Heart right ventricle (tissue), 16 donors: ENCODE measurements at regions of chr3 and their contacts with region 1.

Region 1: GRCh38 chr3:69649120-69650065 is 89.9 kb upstream of the MITF start:
- DNase-seq: no peak
- ATAC-seq: peak in 7 of 8 donors; percentile 66 to 92 (median 74)
- H3K4me3 ChIP-seq: peak overlapping the region in 1 of 10 donors; percentile 9
- H3K27ac ChIP-seq: peak overlapping the region in 1 of 10 donors; percentile 6
- H3K4me1 ChIP-seq: peaks cover 7 to 30% (median 21%) of the 10 kb centered on the region in 9 donors
- H3K27me3 ChIP-seq: no peaks in the 10 kb centered on the region
- CTCF ChIP-seq: no peak

Region 2: GRCh38 chr3:69368129-69368741 is 281.2 kb before region 1 on chr3:
- intact Hi-C with region 1: no loop called
- DNase-seq: no peak
- ATAC-seq: peak in 5 of 8 donors; percentile 33 to 62 (median 35)
- H3K4me3 ChIP-seq: no peak overlapping the region
- H3K27ac ChIP-seq: peak overlapping the region in 4 of 10 donors; percentile 49 to 89 (median 79)
- H3K4me1 ChIP-seq: peaks cover 0 to 55% (median 28%) of the 10 kb centered on the region in 9 donors
- H3K27me3 ChIP-seq: no peaks in the 10 kb centered on the region
- CTCF ChIP-seq: no peak

Region 3: DNA sequence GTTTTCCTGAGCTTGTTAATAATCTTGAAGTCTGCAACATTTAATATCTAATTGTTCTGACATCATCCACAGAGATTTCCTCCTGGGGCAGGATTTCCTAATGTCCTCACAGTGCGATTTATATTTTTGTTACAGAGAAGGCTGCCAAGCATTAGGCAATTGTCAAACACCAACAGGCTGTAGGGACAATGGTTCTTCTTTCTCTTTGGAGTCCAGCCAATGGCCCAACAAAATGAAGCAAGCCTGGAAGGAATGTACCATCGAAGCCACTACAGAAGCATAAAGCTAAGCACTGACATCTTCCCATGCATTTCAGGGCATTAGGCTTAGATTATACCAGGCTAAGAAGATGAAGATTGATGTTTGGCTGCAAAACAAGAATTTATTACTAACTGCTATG is 90.5 kb before region 1 on chr3:
- intact Hi-C with region 1: loop called in 1 of 10 experiments (anchors 5 kb)
- DNase-seq: peak in 1 of 2 donors; percentile 73
- ATAC-seq: peak; percentile 71 to 95 (median 85)
- H3K4me3 ChIP-seq: no peak overlapping the region
- H3K27ac ChIP-seq: peak overlapping the region in 1 of 10 donors; percentile 5
- H3K4me1 ChIP-seq: peaks cover 0 to 41% (median 21%) of the 10 kb centered on the region in 9 donors
- H3K27me3 ChIP-seq: no peaks in the 10 kb centered on the region
- CTCF ChIP-seq: no peak